CD8-positive, alpha-beta T cell (primary cell): ENCODE measurements at regions of chr17 and their contacts with region 1.

Region 1: GRCh38 chr17:42388381-42389134 is at the start of gene STAT3:
- DNase-seq: peak; percentile 99 to 100 (median 100)
- ATAC-seq: peak; percentile 86
- H3K4me3 ChIP-seq: peak within 1 kb of the TSS; percentile 61 to 86
- H3K4me3 Mint-ChIP-seq: peak within 1 kb of the TSS; percentile 99
- H3K27ac ChIP-seq: peak within 1 kb of the TSS; percentile 99
- H3K27ac Mint-ChIP-seq: peak within 1 kb of the TSS; percentile 100
- H3K4me1 ChIP-seq: peaks cover 29% of the 10 kb centered on the region
- H3K4me1 Mint-ChIP-seq: peaks cover 47% of the 10 kb centered on the region
- H3K27me3 ChIP-seq: no peaks in the 10 kb centered on the region
- H3K27me3 Mint-ChIP-seq: no peaks in the 10 kb centered on the region
- CTCF ChIP-seq: no peak
- total RNA-seq, gene STAT3: 338 to 343 TPM

Region 2: DNA sequence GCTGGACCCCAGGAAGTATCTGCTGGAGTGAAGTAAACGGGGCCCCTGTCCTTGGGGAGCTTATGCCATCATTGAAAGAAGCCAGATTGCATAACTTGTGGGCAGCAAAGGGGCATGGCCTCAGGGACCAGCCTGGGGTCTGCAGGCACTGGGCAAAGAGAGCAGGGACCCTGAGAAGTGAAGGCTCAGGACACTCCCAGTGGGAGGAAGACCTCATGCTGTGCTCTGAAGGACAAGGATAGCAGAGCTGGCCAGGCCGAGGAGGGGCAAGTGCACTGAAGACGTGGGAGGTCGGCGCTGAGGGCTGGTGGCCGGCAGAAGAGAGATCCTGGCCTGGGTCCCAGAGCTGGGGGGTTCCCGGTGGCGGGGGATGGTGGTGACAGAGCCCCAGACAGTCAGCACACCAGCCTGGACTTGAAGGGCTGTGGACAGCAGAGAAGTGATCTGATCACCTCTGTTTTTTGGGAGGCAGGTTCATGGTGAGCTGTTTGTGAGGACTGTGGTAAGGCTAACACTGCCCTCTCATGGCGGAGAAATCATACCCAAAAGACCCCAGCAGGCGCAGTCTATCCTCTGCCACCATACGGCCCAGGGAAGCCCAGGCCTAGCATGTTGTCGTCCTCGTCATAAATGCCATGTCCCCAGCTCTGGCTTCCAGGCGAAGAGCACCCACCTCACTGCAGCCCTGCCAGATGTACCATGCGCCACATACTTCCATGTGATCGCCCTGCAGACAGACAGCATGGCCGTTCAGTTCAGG is 429.0 kb before region 1 on chr17:
- CTCF ChIA-PET with region 1: no interaction called
- POLR2A ChIA-PET with region 1: no interaction called
- intact Hi-C with region 1: no loop called
- DNase-seq: no peak
- ATAC-seq: no peak
- H3K4me3 ChIP-seq: no peak overlapping the region
- H3K4me3 Mint-ChIP-seq: no peak overlapping the region
- H3K27ac ChIP-seq: no peak overlapping the region
- H3K27ac Mint-ChIP-seq: no peak overlapping the region
- H3K4me1 ChIP-seq: no peaks in the 10 kb centered on the region
- H3K4me1 Mint-ChIP-seq: no peaks in the 10 kb centered on the region
- H3K27me3 ChIP-seq: no peaks in the 10 kb centered on the region
- H3K27me3 Mint-ChIP-seq: no peaks in the 10 kb centered on the region
- CTCF ChIP-seq: no peak

Region 3: DNA sequence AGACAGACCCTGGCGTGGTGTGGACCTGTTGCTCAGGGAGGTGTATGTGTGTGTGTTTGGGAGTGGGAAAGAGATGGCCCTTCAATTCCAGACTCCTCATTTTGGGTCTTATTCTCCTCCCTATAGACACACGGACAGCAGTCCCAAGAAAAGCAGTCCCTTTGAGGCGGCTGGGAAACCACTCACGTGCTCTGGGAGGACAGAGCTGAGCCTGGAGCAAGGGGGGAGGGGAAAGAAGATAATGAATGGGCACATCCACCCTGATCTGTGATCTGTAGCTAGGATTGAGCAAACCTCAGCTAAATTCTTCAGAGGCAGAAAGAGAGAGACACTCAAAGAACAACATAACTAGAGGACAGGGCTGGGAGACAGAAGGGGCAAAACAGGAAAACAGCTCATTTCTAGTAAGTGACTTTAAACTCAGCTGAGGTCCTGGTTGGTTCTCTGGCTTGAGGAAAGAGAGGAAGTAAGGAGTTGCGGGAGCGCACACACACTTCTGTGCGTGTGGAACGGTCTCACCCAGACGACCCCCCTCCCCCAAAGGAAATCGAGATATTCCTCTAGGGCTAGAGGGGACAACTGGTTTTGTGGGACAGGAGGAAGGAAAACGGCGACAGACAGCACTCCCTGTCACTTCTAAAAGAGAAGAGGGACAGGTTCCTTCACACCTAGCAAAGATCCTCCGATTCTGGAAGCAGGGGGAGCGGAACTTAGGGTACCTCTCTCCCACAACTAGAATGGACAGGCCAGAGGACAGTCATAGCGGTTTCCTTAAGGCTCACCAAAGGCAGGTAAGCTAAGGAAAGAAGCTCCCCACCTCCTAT is 234.4 kb before region 1 on chr17:
- CTCF ChIA-PET with region 1: no interaction called
- POLR2A ChIA-PET with region 1: no interaction called
- intact Hi-C with region 1: loop called in 1 of 2 experiments (anchors 1 kb)
- DNase-seq: peak in 2 of 9 experiments; percentile 20 to 40
- ATAC-seq: no peak
- H3K4me3 ChIP-seq: peak overlapping the region; percentile 94 to 95
- H3K4me3 Mint-ChIP-seq: peak overlapping the region; percentile 98
- H3K27ac ChIP-seq: peak overlapping the region; percentile 78 to 87
- H3K27ac Mint-ChIP-seq: peak overlapping the region; percentile 95
- H3K4me1 ChIP-seq: peaks cover 24% of the 10 kb centered on the region
- H3K4me1 Mint-ChIP-seq: peaks cover 39% of the 10 kb centered on the region
- H3K27me3 ChIP-seq: no peaks in the 10 kb centered on the region
- H3K27me3 Mint-ChIP-seq: no peaks in the 10 kb centered on the region
- CTCF ChIP-seq: no peak

Region 4: DNA sequence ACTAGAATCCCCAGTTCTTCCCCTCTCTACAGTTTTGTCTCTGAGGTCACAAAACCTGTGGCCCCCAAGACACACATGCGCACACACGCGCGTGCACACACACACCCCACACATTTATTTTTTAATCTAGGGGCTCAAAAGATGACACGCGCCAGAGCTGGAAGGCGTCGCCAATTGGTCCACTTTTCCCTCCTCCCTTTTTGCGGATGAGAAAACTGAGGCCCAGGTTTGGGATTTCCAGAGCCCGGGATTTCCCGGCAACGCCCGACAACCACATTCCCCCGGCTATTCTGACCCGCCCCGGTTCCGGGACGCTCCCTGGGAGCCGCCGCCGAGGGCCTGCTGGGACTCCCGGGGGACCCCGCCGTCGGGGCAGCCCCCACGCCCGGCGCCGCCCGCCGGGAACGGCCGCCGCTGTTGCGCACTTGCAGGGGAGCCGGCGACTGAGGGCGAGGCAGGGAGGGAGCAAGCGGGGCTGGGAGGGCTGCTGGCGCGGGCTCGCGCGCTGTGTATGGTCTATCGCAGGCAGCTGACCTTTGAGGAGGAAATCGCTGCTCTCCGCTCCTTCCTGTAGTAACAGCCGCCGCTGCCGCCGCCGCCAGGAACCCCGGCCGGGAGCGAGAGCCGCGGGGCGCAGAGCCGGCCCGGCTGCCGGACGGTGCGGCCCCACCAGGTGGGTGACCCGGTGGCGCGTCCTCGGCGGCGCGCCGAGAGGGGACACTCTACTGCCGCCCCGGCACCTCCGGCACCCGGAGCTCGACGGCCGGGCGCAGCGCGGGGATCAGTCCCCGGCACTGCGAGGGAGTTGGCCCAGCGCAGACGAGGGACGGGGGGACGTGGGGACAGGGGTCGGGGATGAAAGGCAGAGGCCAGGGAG is 100.4 kb before region 1 on chr17 and contains the start of gene STAT5A:
- CTCF ChIA-PET with region 1: no interaction called
- POLR2A ChIA-PET with region 1: interaction called, 23 read pairs
- intact Hi-C with region 1: no loop called
- DNase-seq: peak; percentile 63 to 92 (median 81)
- ATAC-seq: peak; percentile 78
- H3K4me3 ChIP-seq: peak within 1 kb of the TSS; percentile 74 to 84
- H3K4me3 Mint-ChIP-seq: peak within 1 kb of the TSS; percentile 94
- H3K27ac ChIP-seq: peak within 1 kb of the TSS; percentile 87 to 94
- H3K27ac Mint-ChIP-seq: peak within 1 kb of the TSS; percentile 98
- H3K4me1 ChIP-seq: peaks cover 35% of the 10 kb centered on the region
- H3K4me1 Mint-ChIP-seq: peaks cover 50% of the 10 kb centered on the region
- H3K27me3 ChIP-seq: no peaks in the 10 kb centered on the region
- H3K27me3 Mint-ChIP-seq: no peaks in the 10 kb centered on the region
- CTCF ChIP-seq: no peak
- total RNA-seq, gene STAT5A: 300 to 319 TPM

Region 5: DNA sequence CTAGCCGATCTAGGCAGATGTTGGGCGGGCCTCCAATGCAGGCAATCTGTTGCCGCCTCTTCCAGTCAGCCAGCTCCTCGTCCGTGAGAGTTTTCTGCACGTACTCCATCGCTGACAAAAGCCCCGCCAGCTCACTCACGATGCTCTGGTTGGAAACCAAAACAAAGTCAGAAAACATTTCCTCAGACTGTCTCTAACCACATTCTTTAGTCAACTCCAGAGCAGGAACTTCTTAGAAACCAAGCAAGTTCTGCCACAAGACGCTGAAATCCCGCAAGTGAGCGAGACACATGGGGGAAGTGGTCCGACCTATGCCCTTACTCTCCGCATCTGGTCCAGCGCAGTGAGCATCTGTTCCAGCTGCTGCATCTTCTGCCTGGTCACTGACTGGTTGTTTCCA is 51.1 kb before region 1 on chr17:
- CTCF ChIA-PET with region 1: no interaction called
- POLR2A ChIA-PET with region 1: interaction called, 14 read pairs
- intact Hi-C with region 1: loop called (anchors 1 to 2 kb)
- DNase-seq: peak; percentile 31 to 87 (median 67)
- ATAC-seq: peak; percentile 85
- H3K4me3 ChIP-seq: no peak overlapping the region
- H3K4me3 Mint-ChIP-seq: peak overlapping the region; percentile 57
- H3K27ac ChIP-seq: peak overlapping the region; percentile 41 to 54
- H3K27ac Mint-ChIP-seq: peak overlapping the region; percentile 92
- H3K4me1 ChIP-seq: peaks cover 31% of the 10 kb centered on the region
- H3K4me1 Mint-ChIP-seq: peaks cover 39% of the 10 kb centered on the region
- H3K27me3 ChIP-seq: no peaks in the 10 kb centered on the region
- H3K27me3 Mint-ChIP-seq: no peaks in the 10 kb centered on the region
- CTCF ChIP-seq: no peak

Region 6: GRCh38 chr17:42405963-42406495 is 17.5 kb after region 1 on chr17:
- CTCF ChIA-PET with region 1: interaction called, 28 read pairs
- POLR2A ChIA-PET with region 1: interaction called, 19 read pairs
- intact Hi-C with region 1: loop called (anchors 1 to 2 kb)
- DNase-seq: peak; percentile 72 to 90 (median 83)
- ATAC-seq: peak; percentile 78
- H3K4me3 ChIP-seq: no peak overlapping the region
- H3K4me3 Mint-ChIP-seq: no peak overlapping the region
- H3K27ac ChIP-seq: no peak overlapping the region
- H3K27ac Mint-ChIP-seq: no peak overlapping the region
- H3K4me1 ChIP-seq: peaks cover 14% of the 10 kb centered on the region
- H3K4me1 Mint-ChIP-seq: peaks cover 8% of the 10 kb centered on the region
- H3K27me3 ChIP-seq: no peaks in the 10 kb centered on the region
- H3K27me3 Mint-ChIP-seq: no peaks in the 10 kb centered on the region
- CTCF ChIP-seq: peak; percentile 91

Region 7: GRCh38 chr17:42609182-42609813 is 220.7 kb after region 1 on chr17 and contains the starts of genes RETREG3 and TUBG1:
- CTCF ChIA-PET with region 1: no interaction called
- POLR2A ChIA-PET with region 1: interaction called, 10 read pairs
- intact Hi-C with region 1: loop called in 1 of 2 experiments (anchors 1 kb)
- DNase-seq: peak; percentile 98 to 100 (median 99)
- ATAC-seq: peak; percentile 92
- H3K4me3 ChIP-seq: peak within 1 kb of the TSS; percentile 90 to 94
- H3K4me3 Mint-ChIP-seq: peak within 1 kb of the TSS; percentile 100
- H3K27ac ChIP-seq: peak within 1 kb of the TSS; percentile 90 to 91
- H3K27ac Mint-ChIP-seq: peak within 1 kb of the TSS; percentile 99
- H3K4me1 ChIP-seq: peaks cover 39% of the 10 kb centered on the region
- H3K4me1 Mint-ChIP-seq: peaks cover 48% of the 10 kb centered on the region
- H3K27me3 ChIP-seq: no peaks in the 10 kb centered on the region
- H3K27me3 Mint-ChIP-seq: no peaks in the 10 kb centered on the region
- CTCF ChIP-seq: no peak
- total RNA-seq, gene RETREG3: 59.0 to 59.3 TPM
- total RNA-seq, gene TUBG1: 4.9 to 8.4 TPM